K562 (cell line): ENCODE measurements at regions of chr7 and their contacts with region 1.

Region 1: GRCh38 chr7:117019786-117020590 is 66.7 kb downstream of the ST7 start:
- DNase-seq: peak in 3 of 4 experiments; percentile 50 to 92 (median 78)
- ATAC-seq: peak; percentile 87
- H3K4me3 ChIP-seq: peak overlapping the region; percentile 11; the same call in 1 of the 2 replicates
- H3K27ac ChIP-seq: peak overlapping the region; percentile 53; the same call in 2 of the 3 replicates
- H3K4me1 ChIP-seq: peaks cover 11 to 55% of the 10 kb centered on the region in 2 experiments
- H3K27me3 ChIP-seq: no peaks in the 10 kb centered on the region
- CTCF ChIP-seq: no peak; a peak in 1 of 6 replicates
- EP300 ChIP-seq: no peak
- POLR2A ChIP-seq: no peak
- RAD21 ChIP-seq: no peak

Region 2: DNA sequence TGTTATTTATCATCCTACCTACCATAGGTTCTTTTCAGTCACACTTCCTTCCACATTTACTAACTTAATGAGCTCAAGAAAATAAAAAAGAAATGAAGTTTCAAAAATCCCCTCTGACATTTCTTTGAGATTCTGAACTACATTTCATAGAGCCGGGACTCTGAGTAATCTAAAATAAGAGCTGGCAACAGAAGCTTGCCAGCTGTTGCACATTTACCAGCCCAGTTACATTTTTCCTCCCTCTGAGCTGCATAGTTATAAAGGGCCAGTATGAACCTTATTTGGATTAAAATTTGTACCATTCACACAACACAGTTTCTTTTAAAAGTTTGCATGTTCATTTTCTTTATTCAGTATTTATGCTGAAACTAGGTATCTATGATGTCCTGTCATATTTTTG is 640.0 kb before region 1 on chr7:
- CTCF ChIA-PET with region 1: no interaction called
- POLR2A ChIA-PET with region 1: no interaction called
- in situ Hi-C with region 1: no loop called
- intact Hi-C with region 1: no loop called
- DNase-seq: no peak
- ATAC-seq: no peak
- H3K4me3 ChIP-seq: no peak overlapping the region
- H3K27ac ChIP-seq: no peak overlapping the region
- H3K4me1 ChIP-seq: no peaks in the 10 kb centered on the region
- H3K27me3 ChIP-seq: peaks cover 5 to 6% of the 10 kb centered on the region in 2 experiments; a peak in 2 of 5 replicates
- CTCF ChIP-seq: no peak
- EP300 ChIP-seq: no peak
- POLR2A ChIP-seq: no peak
- RAD21 ChIP-seq: no peak

Region 3: GRCh38 chr7:117008883-117009531 is 11.0 kb before region 1 on chr7:
- CTCF ChIA-PET with region 1: no interaction called
- POLR2A ChIA-PET with region 1: interaction called, 10 read pairs
- in situ Hi-C with region 1: no loop called
- intact Hi-C with region 1: no loop called
- DNase-seq: no peak
- ATAC-seq: no peak
- H3K4me3 ChIP-seq: no peak overlapping the region
- H3K27ac ChIP-seq: no peak overlapping the region
- H3K4me1 ChIP-seq: peaks cover 7 to 51% of the 10 kb centered on the region in 2 experiments
- H3K27me3 ChIP-seq: no peaks in the 10 kb centered on the region
- CTCF ChIP-seq: no peak
- EP300 ChIP-seq: no peak
- POLR2A ChIP-seq: no peak
- RAD21 ChIP-seq: no peak

Region 4: GRCh38 chr7:117034851-117035464 is 15.0 kb after region 1 on chr7:
- CTCF ChIA-PET with region 1: no interaction called
- POLR2A ChIA-PET with region 1: interaction called, 14 read pairs
- in situ Hi-C with region 1: no loop called
- intact Hi-C with region 1: no loop called
- DNase-seq: no peak
- ATAC-seq: no peak
- H3K4me3 ChIP-seq: no peak overlapping the region
- H3K27ac ChIP-seq: no peak overlapping the region
- H3K4me1 ChIP-seq: peaks cover 0 to 3% of the 10 kb centered on the region in 2 experiments; a peak in 2 of 5 replicates
- H3K27me3 ChIP-seq: no peaks in the 10 kb centered on the region
- CTCF ChIP-seq: no peak
- EP300 ChIP-seq: no peak
- POLR2A ChIP-seq: no peak
- RAD21 ChIP-seq: no peak

Region 5: GRCh38 chr7:117047496-117047895 is 27.5 kb after region 1 on chr7:
- CTCF ChIA-PET with region 1: no interaction called
- POLR2A ChIA-PET with region 1: no interaction called
- in situ Hi-C with region 1: no loop called
- intact Hi-C with region 1: loop called (anchors 2 kb)
- DNase-seq: no peak
- ATAC-seq: no peak
- H3K4me3 ChIP-seq: no peak overlapping the region
- H3K27ac ChIP-seq: no peak overlapping the region
- H3K4me1 ChIP-seq: peaks cover 15 to 36% of the 10 kb centered on the region in 2 experiments; a peak in 4 of 5 replicates
- H3K27me3 ChIP-seq: no peaks in the 10 kb centered on the region
- CTCF ChIP-seq: no peak
- EP300 ChIP-seq: no peak
- POLR2A ChIP-seq: no peak
- RAD21 ChIP-seq: no peak

Region 6: DNA sequence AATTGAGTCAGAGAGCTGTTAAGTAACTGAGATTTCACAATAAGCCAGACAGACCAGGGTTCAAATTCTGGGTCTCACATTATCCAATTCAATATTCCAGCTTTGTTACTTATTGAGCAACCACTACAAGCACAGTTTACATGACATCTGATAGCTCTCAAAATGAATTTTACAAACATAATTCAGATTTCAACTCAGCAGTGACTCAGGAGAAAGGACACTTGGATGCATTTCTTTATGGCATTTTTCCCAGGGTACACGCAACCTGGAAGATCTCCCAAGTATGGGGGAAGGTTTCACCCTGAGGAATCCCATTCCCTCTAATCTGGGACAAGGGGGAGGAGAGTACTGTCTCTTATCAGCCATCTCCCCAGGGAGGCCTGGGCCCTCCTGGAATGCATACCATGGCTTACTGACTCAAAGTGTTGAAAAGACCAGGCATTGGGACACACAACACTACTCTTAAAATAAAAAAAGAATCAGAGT is 562.3 kb after region 1 on chr7:
- CTCF ChIA-PET with region 1: no interaction called
- POLR2A ChIA-PET with region 1: no interaction called
- in situ Hi-C with region 1: no loop called
- intact Hi-C with region 1: no loop called
- DNase-seq: no peak
- ATAC-seq: no peak
- H3K4me3 ChIP-seq: no peak overlapping the region
- H3K27ac ChIP-seq: no peak overlapping the region
- H3K4me1 ChIP-seq: no peaks in the 10 kb centered on the region
- H3K27me3 ChIP-seq: no peaks in the 10 kb centered on the region
- CTCF ChIP-seq: no peak
- EP300 ChIP-seq: no peak
- POLR2A ChIP-seq: no peak
- RAD21 ChIP-seq: no peak